ENCODE measurements at regions of chr1 and their contacts with region 1.

Region 1: DNA sequence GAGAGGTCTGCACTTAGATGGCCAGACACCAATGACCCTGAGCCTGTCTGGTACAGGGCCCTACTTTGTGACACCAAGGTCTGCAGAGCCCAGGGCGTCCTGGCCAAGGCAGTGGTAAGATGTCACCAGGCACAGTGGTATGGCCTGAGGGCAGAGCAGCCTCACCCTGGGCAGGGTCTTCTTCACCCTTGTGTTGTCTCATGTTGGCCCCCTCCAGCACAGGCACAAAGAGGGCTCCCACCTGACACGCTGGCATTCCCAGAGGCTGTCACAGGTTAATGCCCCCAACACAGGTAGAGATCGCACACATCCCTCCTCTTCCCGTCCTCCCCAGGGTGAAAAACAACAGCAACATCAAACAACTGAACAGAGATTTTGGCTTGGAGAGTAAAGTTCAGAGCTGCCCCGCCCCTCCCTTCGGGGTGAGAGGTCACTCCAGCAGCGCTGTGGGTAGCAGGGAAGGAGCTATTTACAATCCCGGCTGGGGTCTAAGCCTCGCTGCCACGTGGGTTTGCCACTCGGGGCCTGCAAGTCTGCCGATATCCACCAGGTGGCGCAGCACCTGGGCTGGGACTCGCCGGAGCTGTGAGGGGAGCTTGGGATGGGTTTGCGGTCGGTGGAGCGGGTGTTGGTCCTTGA is 12.6 kb downstream of the EFNA3 start:
- DNase-seq: peak; percentile 73 to 75
- ATAC-seq: peak; percentile 64 to 85
- H3K4me3 ChIP-seq: no peak overlapping the region
- H3K27ac ChIP-seq: peak overlapping the region; percentile 45 to 79; a peak in 5 of 6 replicates
- H3K4me1 ChIP-seq: peaks cover 16% of the 10 kb centered on the region
- CTCF ChIP-seq: peak; percentile 91
- EP300 ChIP-seq: no peak
- POLR2A ChIP-seq: no peak
- RAD21 ChIP-seq: peak; percentile 74 to 76

Region 2: DNA sequence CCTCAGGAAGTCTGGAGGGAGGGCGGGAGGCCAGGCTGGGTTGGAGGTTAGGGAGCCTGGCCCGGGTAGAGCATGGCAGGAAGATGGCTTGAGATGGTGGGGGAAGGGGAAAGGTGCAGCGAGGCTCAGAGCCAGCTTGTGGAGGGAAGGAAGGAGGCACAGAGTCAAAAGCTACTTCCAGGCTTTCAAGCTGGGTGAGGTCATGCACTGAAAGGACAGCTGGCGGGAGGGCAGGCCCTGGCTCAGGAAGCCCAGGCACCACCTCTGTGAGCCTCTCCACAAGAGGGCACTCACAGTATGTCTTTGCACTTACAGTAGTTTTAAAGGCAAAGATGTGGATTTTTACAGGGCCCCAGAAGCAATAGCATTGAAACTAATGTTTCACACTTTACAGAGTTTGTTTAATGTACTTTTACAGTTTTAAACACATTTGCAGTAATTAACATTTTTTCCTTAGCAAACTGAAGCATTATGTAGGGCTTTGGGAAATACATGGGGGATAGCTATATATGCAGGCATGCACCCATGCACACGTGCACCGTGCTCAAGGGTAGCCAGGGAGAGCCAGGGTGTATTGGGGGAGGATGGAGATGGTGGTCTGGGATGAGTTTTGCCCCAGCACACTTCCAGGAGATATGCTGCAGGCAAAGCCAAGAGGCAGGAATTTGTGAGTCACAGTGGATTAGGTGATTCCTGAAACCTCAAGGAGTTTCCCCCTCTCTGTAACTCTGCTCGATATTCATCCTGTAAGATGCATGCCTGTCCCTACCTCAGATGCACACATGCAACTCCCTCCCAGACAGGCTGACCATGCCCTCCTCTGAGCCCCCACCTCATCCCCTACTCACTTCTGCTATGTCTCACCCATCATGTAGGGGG is 46.1 kb before region 1 on chr1:
- CTCF ChIA-PET with region 1: interaction called, 36 read pairs
- POLR2A ChIA-PET with region 1: no interaction called
- DNase-seq: peak; percentile 88
- ATAC-seq: peak; percentile 93 to 96
- H3K4me3 ChIP-seq: no peak overlapping the region
- H3K27ac ChIP-seq: peak overlapping the region; percentile 69 to 86
- H3K4me1 ChIP-seq: peaks cover 35% of the 10 kb centered on the region
- CTCF ChIP-seq: peak; percentile 73
- EP300 ChIP-seq: no peak
- POLR2A ChIP-seq: no peak
- RAD21 ChIP-seq: peak; percentile 75 to 81

Region 3: GRCh38 chr1:155078469-155079209 is 12.6 kb before region 1 on chr1 and contains the start of gene EFNA3:
- CTCF ChIA-PET with region 1: interaction called, 350 read pairs
- POLR2A ChIA-PET with region 1: no interaction called
- DNase-seq: peak; percentile 50 to 77
- ATAC-seq: peak; percentile 9 to 41; a peak in 4 of 6 replicates
- H3K4me3 ChIP-seq: peak within 1 kb of the TSS; percentile 55
- H3K27ac ChIP-seq: peak within 1 kb of the TSS; percentile 50 to 78; a peak in 5 of 6 replicates
- H3K4me1 ChIP-seq: peaks cover 44% of the 10 kb centered on the region
- CTCF ChIP-seq: no peak
- EP300 ChIP-seq: no peak
- POLR2A ChIP-seq: no peak
- RAD21 ChIP-seq: no peak
- polyA plus RNA-seq, gene EFNA3: 1.9 and 2.6 TPM in 2 replicates

Region 4: GRCh38 chr1:155117617-155118016 is 26.4 kb after region 1 on chr1:
- CTCF ChIA-PET with region 1: interaction called, 309 read pairs
- POLR2A ChIA-PET with region 1: no interaction called
- DNase-seq: no peak
- ATAC-seq: no peak
- H3K4me3 ChIP-seq: no peak overlapping the region
- H3K27ac ChIP-seq: no peak overlapping the region
- H3K4me1 ChIP-seq: no peaks in the 10 kb centered on the region
- CTCF ChIP-seq: no peak
- EP300 ChIP-seq: no peak
- POLR2A ChIP-seq: no peak
- RAD21 ChIP-seq: no peak

Region 5: GRCh38 chr1:155145491-155145890 is 54.3 kb after region 1 on chr1:
- CTCF ChIA-PET with region 1: interaction called, 79 read pairs
- POLR2A ChIA-PET with region 1: no interaction called
- DNase-seq: no peak
- ATAC-seq: peak in 1 of 2 experiments; percentile 52; a peak in 1 of 6 replicates
- H3K4me3 ChIP-seq: no peak overlapping the region
- H3K27ac ChIP-seq: no peak overlapping the region
- H3K4me1 ChIP-seq: no peaks in the 10 kb centered on the region
- CTCF ChIP-seq: no peak
- EP300 ChIP-seq: no peak
- POLR2A ChIP-seq: no peak
- RAD21 ChIP-seq: no peak

Region 6: DNA sequence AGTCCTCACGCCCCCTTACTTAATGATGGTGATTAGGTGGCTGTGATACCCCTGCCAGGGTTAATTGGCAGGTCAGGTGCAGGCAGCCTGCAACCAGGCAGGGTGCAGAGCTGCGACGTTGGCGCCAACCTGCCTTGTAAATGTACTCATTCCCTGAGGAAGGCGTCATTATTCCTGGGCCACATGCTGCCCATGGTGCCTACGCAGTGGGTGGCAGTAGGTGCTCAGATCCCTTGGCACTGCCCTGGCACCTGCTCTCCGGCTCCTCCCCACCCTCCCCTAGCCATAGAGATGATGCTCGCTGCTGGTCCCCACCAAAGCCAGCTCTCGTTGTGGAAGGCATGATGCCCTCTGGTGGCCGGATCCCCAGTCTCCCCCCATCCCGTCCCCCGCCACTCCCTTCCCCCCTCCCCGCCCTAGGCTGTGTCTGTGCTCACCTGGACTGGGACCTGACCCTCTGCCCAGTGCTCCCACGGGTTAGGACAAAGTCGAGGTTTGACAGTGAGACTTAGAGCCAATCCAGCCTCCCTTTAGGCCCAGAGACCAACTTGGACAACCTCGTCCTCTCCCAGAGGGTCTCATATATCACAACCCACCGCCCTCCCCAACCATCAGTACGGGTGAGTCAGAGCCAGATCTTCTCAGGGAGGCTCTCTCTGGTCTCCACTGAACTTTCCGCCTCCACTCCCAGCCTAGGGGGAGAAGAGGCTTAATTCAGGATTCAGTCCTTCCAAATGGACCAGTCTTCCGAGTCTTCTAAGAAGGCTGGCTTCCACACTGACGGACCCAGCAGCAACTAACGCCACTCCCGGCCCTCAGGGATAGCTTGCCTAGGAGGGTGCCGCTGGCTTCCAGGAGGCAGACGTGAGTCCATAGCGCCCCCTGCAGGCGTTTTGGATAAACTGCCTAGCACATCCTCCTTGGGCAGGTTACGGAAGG is 76.2 kb after region 1 on chr1:
- CTCF ChIA-PET with region 1: interaction called, 384 read pairs
- POLR2A ChIA-PET with region 1: interaction called, 5 read pairs
- DNase-seq: peak; percentile 77 to 91
- ATAC-seq: peak; percentile 84 to 90
- H3K4me3 ChIP-seq: peak overlapping the region; percentile 34
- H3K27ac ChIP-seq: peak overlapping the region; percentile 62 to 81
- H3K4me1 ChIP-seq: peaks cover 12% of the 10 kb centered on the region
- CTCF ChIP-seq: peak; percentile 94
- EP300 ChIP-seq: no peak
- POLR2A ChIP-seq: no peak
- RAD21 ChIP-seq: peak; percentile 93 to 98

Region 7: DNA sequence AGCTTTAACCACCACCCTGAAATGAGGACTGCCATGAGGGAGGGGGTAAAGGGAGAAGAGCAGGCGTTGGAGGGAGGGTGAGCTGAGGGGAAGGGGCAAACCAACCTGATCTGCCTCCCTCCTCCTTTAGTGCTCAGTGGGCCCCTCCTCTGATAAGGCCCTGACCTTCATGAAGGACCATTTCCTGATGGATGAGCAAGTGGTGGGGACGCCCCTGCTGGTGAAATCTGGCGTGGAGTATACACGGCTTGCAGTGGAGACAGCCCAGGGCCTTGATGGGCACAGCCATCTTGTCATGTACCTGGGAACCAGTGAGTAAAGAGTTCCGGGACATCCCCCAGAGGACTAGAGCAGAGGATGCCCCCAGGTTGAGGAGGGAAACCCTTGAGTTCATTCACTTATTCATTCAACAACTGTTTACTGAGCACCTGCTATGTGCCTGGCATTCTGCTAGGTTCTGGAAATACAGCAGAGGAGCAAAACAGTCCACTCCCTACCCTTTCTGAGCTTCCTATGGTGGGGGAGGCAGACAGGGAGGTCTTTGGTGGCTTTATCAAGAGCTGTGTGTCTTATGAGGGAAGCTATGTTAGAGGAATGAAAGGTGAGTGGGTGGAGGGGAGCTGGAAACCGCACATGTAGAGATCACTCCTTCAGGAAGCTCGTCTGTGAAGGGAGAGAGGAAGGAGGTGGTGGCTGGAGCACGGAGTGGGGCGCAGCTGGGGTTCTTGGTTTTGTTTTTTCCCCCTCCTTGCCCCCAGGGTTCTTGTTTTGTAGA is 1081.7 kb after region 1 on chr1:
- CTCF ChIA-PET with region 1: no interaction called
- POLR2A ChIA-PET with region 1: no interaction called
- DNase-seq: peak; percentile 32 to 47
- ATAC-seq: peak; percentile 72 to 75; a peak in 4 of 6 replicates
- H3K4me3 ChIP-seq: no peak overlapping the region
- H3K27ac ChIP-seq: no peak overlapping the region
- H3K4me1 ChIP-seq: no peaks in the 10 kb centered on the region
- CTCF ChIP-seq: no peak
- EP300 ChIP-seq: no peak
- POLR2A ChIP-seq: no peak
- RAD21 ChIP-seq: no peak